AG04450 (cell line): ENCODE measurements at regions of chr2 and their contacts with region 1.

Region 1: DNA sequence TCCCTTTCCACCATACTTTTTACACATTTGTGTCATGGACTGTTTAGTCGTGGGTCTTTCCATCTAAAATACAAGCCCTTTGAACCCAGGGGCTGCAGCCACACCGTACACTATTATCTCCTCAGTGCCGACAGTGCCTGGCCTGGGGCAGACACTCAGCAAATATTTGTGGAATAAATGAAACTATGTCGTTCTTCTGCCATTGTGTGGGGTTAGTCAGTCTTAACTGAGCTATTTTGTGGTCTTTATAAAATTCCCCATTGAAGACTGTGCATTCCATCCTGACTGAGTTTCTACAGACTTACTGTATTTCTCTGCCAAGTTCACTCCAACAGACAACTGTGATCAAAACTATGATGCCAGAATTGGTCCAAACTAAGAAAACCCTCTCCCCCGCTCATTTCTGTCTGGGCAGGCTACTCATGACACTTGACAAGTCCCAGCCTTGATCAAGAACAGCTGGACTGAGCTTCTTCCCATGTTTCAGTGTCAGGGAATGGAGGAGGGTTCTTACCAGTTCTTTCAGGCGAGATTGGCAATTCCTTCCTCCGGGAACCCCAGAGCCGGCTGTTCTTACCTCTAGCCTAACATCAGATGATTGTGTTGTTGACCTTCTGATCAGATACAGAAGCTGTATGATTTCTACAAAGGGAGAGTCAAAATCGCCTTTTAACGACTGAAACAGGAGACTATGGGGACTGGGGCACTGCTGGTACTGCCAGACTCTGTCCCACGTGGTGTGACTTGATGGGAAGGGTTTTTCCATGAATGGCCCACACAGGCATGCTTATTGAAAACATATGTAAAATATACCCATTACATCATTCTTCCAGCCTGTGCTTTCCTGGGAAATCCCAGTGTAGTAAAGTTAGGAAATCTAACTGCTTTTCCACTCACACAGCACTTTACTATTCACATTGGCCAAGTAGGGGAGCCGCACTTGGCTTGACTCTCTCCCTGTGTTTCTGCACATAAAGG is 77.4 kb upstream of the NPAS2 start:
- DNase-seq: peak; percentile 94
- H3K4me3 ChIP-seq: peak overlapping the region; percentile 30
- H3K27ac ChIP-seq: peak overlapping the region; percentile 100
- H3K27me3 ChIP-seq: no peaks in the 10 kb centered on the region
- CTCF ChIP-seq: no peak

Region 2: DNA sequence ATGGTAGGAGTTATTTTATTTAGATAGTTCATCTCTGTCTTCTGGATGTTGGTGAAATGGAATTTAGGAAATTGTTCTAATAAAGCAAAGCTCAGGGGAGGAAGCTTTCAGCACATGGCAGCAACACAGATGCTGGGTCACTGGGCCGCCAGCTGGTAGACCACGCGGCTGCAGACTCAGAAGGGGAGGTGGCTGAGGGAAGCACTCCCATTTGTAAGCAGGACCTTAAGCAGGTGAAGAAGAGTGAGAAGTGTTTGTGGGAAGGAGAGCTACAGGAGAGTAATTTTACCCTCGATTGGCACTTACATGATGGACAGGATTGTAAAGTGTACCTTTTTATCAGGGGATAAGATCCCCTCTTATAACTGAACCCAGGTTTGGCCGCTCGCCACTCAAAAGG is 247.9 kb before region 1 on chr2:
- CTCF ChIA-PET with region 1: no interaction called
- POLR2A ChIA-PET with region 1: no interaction called
- DNase-seq: no peak
- H3K4me3 ChIP-seq: no peak overlapping the region
- H3K27ac ChIP-seq: no peak overlapping the region
- H3K27me3 ChIP-seq: peaks cover 8% of the 10 kb centered on the region
- CTCF ChIP-seq: no peak

Region 3: GRCh38 chr2:100757621-100758394 is 15.2 kb after region 1 on chr2:
- CTCF ChIA-PET with region 1: interaction called, 3 read pairs
- POLR2A ChIA-PET with region 1: interaction called, 12 read pairs
- DNase-seq: peak; percentile 84
- H3K4me3 ChIP-seq: no peak overlapping the region
- H3K27ac ChIP-seq: no peak overlapping the region
- H3K27me3 ChIP-seq: no peaks in the 10 kb centered on the region
- CTCF ChIP-seq: no peak

Region 4: DNA sequence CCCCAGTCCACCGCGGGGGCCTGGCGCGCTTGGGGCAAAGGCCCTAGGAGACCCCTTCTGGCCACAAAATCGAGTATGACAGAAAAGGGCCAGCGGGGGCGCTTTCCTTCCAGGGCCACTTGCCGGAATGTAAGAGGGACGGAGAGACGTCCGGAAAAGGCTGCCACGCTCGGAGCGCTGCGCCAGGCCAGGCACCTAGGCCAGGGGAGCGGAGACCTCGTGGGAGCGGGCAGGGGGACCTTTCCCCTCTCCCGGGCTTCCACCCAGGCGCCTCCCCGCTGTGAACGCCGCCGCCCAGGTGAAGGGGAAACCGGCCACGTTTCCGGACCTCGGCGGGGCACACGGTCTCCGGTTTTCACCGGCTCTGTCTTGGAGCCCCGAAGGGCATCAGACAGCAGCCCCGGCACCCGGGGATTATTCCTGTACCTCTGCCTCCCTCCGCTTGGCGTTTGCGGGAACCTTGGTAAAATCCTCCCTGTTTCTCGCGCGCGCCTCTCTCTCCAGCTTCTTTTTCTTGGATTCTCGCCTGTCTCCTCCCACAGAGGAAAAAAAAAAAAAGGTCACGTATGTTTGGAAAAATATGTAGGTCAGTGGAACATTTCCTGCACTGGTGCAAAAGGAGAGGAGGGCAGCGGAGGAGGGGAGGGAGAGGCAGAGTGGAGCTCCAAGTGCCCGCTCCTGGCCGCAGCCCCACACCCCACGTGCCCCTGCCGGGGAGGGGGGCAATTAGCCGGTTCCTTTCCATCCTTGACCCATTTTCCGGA is 76.2 kb after region 1 on chr2:
- CTCF ChIA-PET with region 1: no interaction called
- POLR2A ChIA-PET with region 1: interaction called, 12 read pairs
- DNase-seq: peak; percentile 33
- H3K4me3 ChIP-seq: peak overlapping the region; percentile 84
- H3K27ac ChIP-seq: peak overlapping the region; percentile 61
- H3K27me3 ChIP-seq: no peaks in the 10 kb centered on the region
- CTCF ChIP-seq: peak; percentile 40